ENCODE measurements at regions of chr1 and their contacts with region 1.

Region 1: GRCh38 chr1:32876341-32877210 is 5.9 kb upstream of the FNDC5 start:
- DNase-seq: no peak
- H3K4me3 ChIP-seq: no peak overlapping the region
- CTCF ChIP-seq: peak; percentile 95

Region 2: GRCh38 chr1:32848354-32849063 is 28.1 kb before region 1 on chr1:
- CTCF ChIA-PET with region 1: interaction called, 28 read pairs
- POLR2A ChIA-PET with region 1: no interaction called
- DNase-seq: no peak
- H3K4me3 ChIP-seq: no peak overlapping the region
- CTCF ChIP-seq: no peak

Region 3: GRCh38 chr1:32900371-32900950 is 23.9 kb after region 1 on chr1:
- CTCF ChIA-PET with region 1: interaction called, 179 read pairs
- POLR2A ChIA-PET with region 1: no interaction called
- DNase-seq: no peak
- H3K4me3 ChIP-seq: peak overlapping the region; percentile 63
- CTCF ChIP-seq: no peak

Region 4: GRCh38 chr1:33080885-33081553 is 204.4 kb after region 1 on chr1 and contains the start of gene AZIN2:
- CTCF ChIA-PET with region 1: interaction called, 187 read pairs
- POLR2A ChIA-PET with region 1: no interaction called
- DNase-seq: peak; percentile 60
- H3K4me3 ChIP-seq: peak within 1 kb of the TSS; percentile 79
- CTCF ChIP-seq: no peak

Measured in AG04449 (cell line).